ENCODE measurements at regions of chr5 and their contacts with region 1.

Region 1: DNA sequence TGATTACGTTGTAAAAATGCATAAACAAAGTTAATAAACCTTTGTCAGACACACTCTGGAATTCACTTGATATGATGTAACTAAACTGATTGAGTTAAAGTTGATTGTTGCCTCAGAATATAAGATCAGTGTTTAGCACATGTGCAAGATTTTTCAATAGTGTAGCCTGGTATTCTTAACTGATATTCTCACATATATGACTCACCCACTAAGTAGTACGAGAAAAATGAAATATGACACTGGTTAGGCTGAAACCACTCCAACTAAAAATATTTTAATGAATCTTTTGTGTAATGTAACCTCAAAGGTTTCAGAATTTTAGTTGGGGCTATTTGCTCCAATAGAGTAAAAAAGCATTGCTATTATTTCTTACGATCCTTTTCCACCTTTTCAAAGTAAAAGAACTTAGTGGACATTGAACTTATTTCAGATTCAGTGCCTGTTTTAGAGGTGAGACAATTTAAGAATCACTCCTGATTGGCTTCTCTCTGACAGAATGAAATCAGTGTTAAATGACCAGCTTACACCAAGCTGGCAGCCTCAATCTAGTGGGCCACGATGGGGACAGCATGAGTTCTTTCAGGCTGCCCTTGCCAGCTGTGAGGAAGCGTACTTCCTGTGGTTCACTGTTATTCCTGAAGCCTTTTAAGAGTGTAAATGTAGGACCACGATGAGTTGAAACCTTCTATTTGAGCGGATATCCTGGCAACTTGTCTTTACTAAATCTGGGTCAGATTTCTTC is 277.3 kb upstream of the CDH9 start:
- DNase-seq: peak; percentile 77
- ATAC-seq: peak; percentile 74
- H3K4me3 ChIP-seq: no peak overlapping the region
- H3K27ac ChIP-seq: peak overlapping the region; percentile 95
- H3K4me1 ChIP-seq: peaks cover 4% of the 10 kb centered on the region
- H3K27me3 ChIP-seq: no peaks in the 10 kb centered on the region
- CTCF ChIP-seq: no peak
- POLR2A ChIP-seq: no peak
- RAD21 ChIP-seq: no peak

Region 2: DNA sequence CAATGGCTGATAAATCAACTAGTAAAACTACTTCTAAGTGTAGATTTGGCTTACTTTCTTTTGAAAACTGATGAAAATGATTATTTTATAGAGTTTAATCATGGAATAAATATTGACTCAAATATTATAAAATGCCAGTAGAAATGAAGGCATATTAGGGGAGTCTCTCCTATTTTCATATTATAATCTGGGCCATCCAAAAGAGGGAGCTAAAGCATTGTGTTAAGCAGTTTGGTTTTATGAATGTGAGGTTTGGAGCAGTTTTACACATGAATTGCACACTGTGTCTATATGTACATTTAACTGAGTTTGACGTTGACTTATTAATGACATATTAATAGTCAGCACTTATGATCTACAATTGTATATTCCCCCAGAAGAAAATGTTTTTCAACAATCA is 294.7 kb before region 1 on chr5:
- CTCF ChIA-PET with region 1: no interaction called
- POLR2A ChIA-PET with region 1: no interaction called
- dilution Hi-C with region 1: no loop called
- in situ Hi-C with region 1: no loop called
- intact Hi-C with region 1: no loop called
- DNase-seq: peak; percentile 0
- ATAC-seq: no peak
- H3K4me3 ChIP-seq: no peak overlapping the region
- H3K27ac ChIP-seq: no peak overlapping the region
- H3K4me1 ChIP-seq: no peaks in the 10 kb centered on the region
- H3K27me3 ChIP-seq: no peaks in the 10 kb centered on the region
- CTCF ChIP-seq: peak; percentile 42
- POLR2A ChIP-seq: no peak
- RAD21 ChIP-seq: peak; percentile 62

Region 3: GRCh38 chr5:27241569-27242251 is 74.0 kb before region 1 on chr5:
- CTCF ChIA-PET with region 1: no interaction called
- POLR2A ChIA-PET with region 1: no interaction called
- dilution Hi-C with region 1: no loop called
- in situ Hi-C with region 1: no loop called
- intact Hi-C with region 1: loop called (anchors 5 kb)
- DNase-seq: peak; percentile 97
- ATAC-seq: peak; percentile 93
- H3K4me3 ChIP-seq: no peak overlapping the region
- H3K27ac ChIP-seq: peak overlapping the region; percentile 82
- H3K4me1 ChIP-seq: peaks cover 4% of the 10 kb centered on the region; the same call in 1 of the 2 replicates
- H3K27me3 ChIP-seq: no peaks in the 10 kb centered on the region
- CTCF ChIP-seq: peak; percentile 56
- POLR2A ChIP-seq: no peak
- RAD21 ChIP-seq: peak; percentile 41

Region 4: GRCh38 chr5:27341342-27341741 is 25.6 kb after region 1 on chr5:
- CTCF ChIA-PET with region 1: no interaction called
- POLR2A ChIA-PET with region 1: no interaction called
- dilution Hi-C with region 1: no loop called
- in situ Hi-C with region 1: no loop called
- intact Hi-C with region 1: no loop called
- DNase-seq: no peak
- ATAC-seq: no peak
- H3K4me3 ChIP-seq: no peak overlapping the region
- H3K27ac ChIP-seq: no peak overlapping the region
- H3K4me1 ChIP-seq: no peaks in the 10 kb centered on the region
- H3K27me3 ChIP-seq: no peaks in the 10 kb centered on the region
- CTCF ChIP-seq: no peak
- POLR2A ChIP-seq: no peak
- RAD21 ChIP-seq: no peak

Region 5: DNA sequence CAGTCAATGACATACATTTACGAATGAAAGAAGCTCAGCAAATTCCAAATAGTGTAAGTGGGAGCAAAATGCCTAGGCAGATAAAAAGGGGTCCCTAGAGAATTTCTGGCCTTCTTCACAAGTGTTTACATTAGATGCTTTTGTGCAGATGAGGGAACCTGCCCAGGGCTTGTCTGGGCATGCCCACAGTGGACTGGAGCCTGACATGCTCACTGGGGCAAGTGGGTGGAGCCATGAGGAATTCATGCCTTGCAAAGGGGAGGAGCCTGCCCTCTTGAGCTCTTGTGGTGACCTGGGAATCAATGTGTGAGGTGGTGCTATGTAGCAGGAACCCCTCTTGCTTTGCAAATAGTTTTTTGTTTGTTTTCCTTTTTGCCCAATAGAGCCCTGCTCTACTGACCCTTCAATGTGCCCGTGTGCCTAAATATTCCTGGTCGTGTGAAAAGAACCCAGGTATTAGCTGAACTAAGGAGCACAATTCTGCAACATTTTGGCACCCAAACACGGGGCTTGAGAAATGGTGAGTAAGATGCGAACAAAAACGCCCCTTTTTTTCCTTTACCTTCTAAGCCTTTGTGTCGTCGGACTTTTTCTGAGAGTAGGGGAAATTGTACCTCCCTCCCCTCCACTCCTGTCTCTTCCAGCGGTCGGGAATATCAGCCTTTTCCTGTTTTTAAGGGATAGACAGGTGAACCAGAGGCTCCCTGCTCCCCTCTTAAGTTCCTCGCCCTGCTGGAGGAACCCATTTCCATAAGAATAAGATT is 156.5 kb after region 1 on chr5:
- CTCF ChIA-PET with region 1: no interaction called
- POLR2A ChIA-PET with region 1: no interaction called
- dilution Hi-C with region 1: no loop called
- in situ Hi-C with region 1: no loop called
- intact Hi-C with region 1: loop called (anchors 10 kb)
- DNase-seq: peak; percentile 19
- ATAC-seq: peak; percentile 97
- H3K4me3 ChIP-seq: peak overlapping the region; percentile 57; the same call in 1 of the 2 replicates
- H3K27ac ChIP-seq: no peak overlapping the region
- H3K4me1 ChIP-seq: no peaks in the 10 kb centered on the region
- H3K27me3 ChIP-seq: no peaks in the 10 kb centered on the region
- CTCF ChIP-seq: no peak
- POLR2A ChIP-seq: no peak
- RAD21 ChIP-seq: no peak

Measured in IMR-90 (cell line).